ENCODE measurements at regions of chr19 and their contacts with region 1.

Region 1: GRCh38 chr19:2578901-2579677 is 103.2 kb downstream of the GADD45B start:
- DNase-seq: peak; percentile 83
- ATAC-seq: peak; percentile 79
- H3K4me3 Mint-ChIP-seq: no peak overlapping the region
- H3K27ac Mint-ChIP-seq: no peak overlapping the region
- H3K4me1 Mint-ChIP-seq: peaks cover 2% of the 10 kb centered on the region
- H3K27me3 Mint-ChIP-seq: peaks cover 23% of the 10 kb centered on the region

Region 2: DNA sequence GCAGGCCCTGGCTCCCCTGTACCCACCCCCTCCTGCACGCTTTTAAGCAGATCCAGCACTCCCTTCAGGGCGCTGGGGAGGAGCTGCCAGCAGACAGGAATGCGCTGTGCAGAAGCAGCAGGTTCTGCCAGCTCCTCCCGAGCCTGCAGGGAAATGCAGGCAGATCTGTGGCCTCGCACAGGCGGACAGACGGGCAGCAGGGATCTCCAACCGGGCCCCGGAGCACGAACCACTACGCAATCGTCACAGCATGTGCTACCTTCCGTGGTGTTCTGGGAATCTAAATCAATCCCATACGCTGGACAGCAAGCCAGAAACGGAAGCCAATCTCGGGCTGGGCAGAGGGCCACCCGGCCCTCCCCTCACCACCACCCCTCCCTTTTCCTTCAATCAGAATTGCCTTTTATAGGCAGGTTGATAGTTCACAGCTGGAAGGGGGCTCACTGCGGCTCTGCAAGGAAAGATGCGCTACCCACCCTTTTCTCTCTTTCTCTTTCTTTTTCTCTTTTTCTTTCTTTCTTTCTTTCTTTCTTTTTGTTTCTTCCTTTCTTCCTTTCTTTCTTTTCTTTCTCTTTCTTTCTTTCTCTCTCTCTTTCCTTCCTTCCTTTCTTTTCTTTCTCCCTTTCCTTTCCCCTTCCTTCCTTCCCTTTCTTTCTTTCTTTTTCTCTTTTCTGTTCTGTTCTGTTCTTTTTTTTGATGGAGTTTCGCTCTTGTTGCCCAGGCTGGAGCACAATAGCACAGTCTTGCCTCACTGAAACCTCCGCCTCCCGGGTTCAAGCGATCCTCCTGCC is 23.5 kb after region 1 on chr19:
- CTCF ChIA-PET with region 1: interaction called, 16 read pairs
- DNase-seq: no peak
- ATAC-seq: no peak
- H3K4me3 Mint-ChIP-seq: no peak overlapping the region
- H3K27ac Mint-ChIP-seq: no peak overlapping the region
- H3K4me1 Mint-ChIP-seq: peaks cover 19% of the 10 kb centered on the region
- H3K27me3 Mint-ChIP-seq: peaks cover 13% of the 10 kb centered on the region

Region 3: GRCh38 chr19:2618611-2619010 is 39.5 kb after region 1 on chr19:
- CTCF ChIA-PET with region 1: interaction called, 12 read pairs
- DNase-seq: peak; percentile 78
- ATAC-seq: no peak
- H3K4me3 Mint-ChIP-seq: peak overlapping the region; percentile 47
- H3K27ac Mint-ChIP-seq: peak overlapping the region; percentile 100
- H3K4me1 Mint-ChIP-seq: peaks cover 71% of the 10 kb centered on the region
- H3K27me3 Mint-ChIP-seq: no peaks in the 10 kb centered on the region

Region 4: GRCh38 chr19:2636897-2637683 is 58.0 kb after region 1 on chr19:
- CTCF ChIA-PET with region 1: interaction called, 19 read pairs
- DNase-seq: peak; percentile 80
- ATAC-seq: peak; percentile 84
- H3K4me3 Mint-ChIP-seq: no peak overlapping the region
- H3K27ac Mint-ChIP-seq: no peak overlapping the region
- H3K4me1 Mint-ChIP-seq: no peaks in the 10 kb centered on the region
- H3K27me3 Mint-ChIP-seq: peaks cover 8% of the 10 kb centered on the region

Region 5: GRCh38 chr19:2865334-2866221 is 286.5 kb after region 1 on chr19:
- CTCF ChIA-PET with region 1: no interaction called
- DNase-seq: no peak
- ATAC-seq: no peak
- H3K4me3 Mint-ChIP-seq: no peak overlapping the region
- H3K27ac Mint-ChIP-seq: no peak overlapping the region
- H3K4me1 Mint-ChIP-seq: no peaks in the 10 kb centered on the region
- H3K27me3 Mint-ChIP-seq: peaks cover 5% of the 10 kb centered on the region

Measured in activated CD8-positive, alpha-beta memory T cell treated with anti-CD3 and anti-CD28 coated beads, Interleukin-2, amount 10 ng/mL, durations not matched to agents 7 days and 5 days (primary cell).